ENCODE measurements at regions of chr9 and their contacts with region 1.

Region 1: GRCh38 chr9:89597711-89598625 is 6.8 kb upstream of the GADD45G start:
- DNase-seq: no peak
- H3K4me3 ChIP-seq: no peak overlapping the region
- CTCF ChIP-seq: peak; percentile 63

Region 2: DNA sequence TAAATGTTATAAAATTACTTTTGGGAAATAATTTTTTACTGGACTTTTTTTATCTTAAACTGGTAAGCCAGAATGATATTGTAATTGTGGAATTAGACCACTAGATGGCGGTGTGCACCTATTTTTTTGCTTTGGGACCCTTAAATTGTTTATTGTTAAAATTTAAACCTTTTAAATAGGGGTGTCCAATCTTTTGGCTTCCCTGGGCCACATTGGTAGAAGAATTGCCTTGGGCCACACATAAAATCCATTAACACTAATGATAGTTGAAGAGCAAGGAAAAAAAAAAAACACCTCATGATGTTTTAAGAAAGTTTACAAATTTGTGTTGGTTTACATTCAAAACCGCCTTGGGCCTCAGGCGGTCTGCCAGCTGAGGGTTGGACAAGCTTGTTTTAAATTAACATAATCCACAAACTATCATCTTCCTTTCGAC is 21.5 kb before region 1 on chr9:
- CTCF ChIA-PET with region 1: interaction called, 18 read pairs
- POLR2A ChIA-PET with region 1: no interaction called
- DNase-seq: no peak
- H3K4me3 ChIP-seq: no peak overlapping the region
- CTCF ChIP-seq: no peak

Region 3: GRCh38 chr9:90095682-90096081 is 497.7 kb after region 1 on chr9:
- CTCF ChIA-PET with region 1: interaction called, 265 read pairs
- POLR2A ChIA-PET with region 1: interaction called, 3 read pairs
- DNase-seq: no peak
- H3K4me3 ChIP-seq: no peak overlapping the region
- CTCF ChIP-seq: no peak

Region 4: DNA sequence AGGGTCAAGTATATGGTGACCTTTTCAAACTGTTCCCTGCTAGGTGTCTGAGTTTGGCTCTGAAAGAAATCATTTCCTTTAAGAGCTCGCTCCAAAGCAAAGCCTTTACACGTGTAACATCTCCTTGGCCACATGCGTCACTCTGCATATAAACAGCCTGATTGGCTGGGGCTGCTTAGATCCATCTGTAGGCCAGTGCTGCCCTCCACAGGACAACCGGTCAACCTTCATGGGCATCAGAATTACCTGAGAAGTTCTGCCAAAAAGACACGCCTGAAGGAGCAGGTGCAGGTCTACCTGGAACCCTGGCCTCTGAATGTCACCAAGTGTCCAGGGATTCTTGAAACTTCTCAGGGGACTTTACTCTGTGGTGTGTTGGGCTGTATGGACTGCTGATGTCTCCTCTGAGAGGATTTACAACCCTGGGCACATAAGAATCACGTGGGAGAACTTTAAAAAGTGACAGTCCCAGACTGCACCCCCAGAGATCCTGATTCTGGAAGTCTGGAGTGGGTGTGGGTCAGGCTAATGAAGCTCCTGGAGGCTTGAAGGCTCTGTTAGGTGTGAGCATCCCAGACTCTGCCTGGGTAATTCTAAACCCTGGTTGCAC is 504.4 kb after region 1 on chr9:
- CTCF ChIA-PET with region 1: interaction called, 265 read pairs
- POLR2A ChIA-PET with region 1: interaction called, 3 read pairs
- DNase-seq: peak; percentile 47
- H3K4me3 ChIP-seq: no peak overlapping the region
- CTCF ChIP-seq: peak; percentile 68